Naive thymus-derived CD4-positive, alpha-beta T cell (primary cell): ENCODE measurements at regions of chr14 and their contacts with region 1.

Region 1: DNA sequence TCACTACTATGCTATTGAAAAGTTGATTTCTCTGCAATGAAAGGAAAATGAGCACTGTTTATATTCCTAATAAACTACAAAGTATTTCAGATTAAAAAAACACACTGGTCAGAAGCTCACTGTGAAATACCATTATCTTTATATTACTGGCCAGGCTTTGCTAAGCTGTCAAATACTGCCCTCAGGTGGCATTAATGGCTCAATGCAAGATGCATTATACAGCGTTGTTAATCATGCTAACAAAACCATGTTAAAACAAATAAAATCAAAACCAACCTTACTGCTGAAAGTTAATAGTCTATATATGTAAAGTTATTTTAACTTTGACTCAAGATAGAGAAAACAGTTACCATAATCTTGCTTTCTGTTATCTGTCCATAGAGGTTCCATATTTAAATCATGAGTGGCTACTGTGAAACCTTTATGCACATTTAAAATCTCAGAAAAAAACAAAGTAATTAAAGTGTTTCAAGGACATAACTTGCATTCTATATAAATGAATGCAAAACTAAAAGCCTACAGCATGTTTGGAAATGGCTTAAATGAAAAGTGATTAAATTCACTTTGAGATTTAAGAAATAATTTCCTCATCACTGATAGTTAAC is 121.7 kb downstream of the RALGAPA1 start:
- DNase-seq: peak in 5 of 9 donors; percentile 2 to 20 (median 10)
- ATAC-seq: peak; percentile 74
- H3K4me3 ChIP-seq: no peak overlapping the region
- H3K4me3 Mint-ChIP-seq: no peak overlapping the region
- H3K27ac ChIP-seq: no peak overlapping the region
- H3K27ac Mint-ChIP-seq: no peak overlapping the region
- H3K4me1 ChIP-seq: no peaks in the 10 kb centered on the region
- H3K4me1 Mint-ChIP-seq: peaks cover 0 to 15% (median 0%) of the 10 kb centered on the region in 7 donors
- H3K27me3 ChIP-seq: no peaks in the 10 kb centered on the region
- H3K27me3 Mint-ChIP-seq: no peaks in the 10 kb centered on the region

Region 2: DNA sequence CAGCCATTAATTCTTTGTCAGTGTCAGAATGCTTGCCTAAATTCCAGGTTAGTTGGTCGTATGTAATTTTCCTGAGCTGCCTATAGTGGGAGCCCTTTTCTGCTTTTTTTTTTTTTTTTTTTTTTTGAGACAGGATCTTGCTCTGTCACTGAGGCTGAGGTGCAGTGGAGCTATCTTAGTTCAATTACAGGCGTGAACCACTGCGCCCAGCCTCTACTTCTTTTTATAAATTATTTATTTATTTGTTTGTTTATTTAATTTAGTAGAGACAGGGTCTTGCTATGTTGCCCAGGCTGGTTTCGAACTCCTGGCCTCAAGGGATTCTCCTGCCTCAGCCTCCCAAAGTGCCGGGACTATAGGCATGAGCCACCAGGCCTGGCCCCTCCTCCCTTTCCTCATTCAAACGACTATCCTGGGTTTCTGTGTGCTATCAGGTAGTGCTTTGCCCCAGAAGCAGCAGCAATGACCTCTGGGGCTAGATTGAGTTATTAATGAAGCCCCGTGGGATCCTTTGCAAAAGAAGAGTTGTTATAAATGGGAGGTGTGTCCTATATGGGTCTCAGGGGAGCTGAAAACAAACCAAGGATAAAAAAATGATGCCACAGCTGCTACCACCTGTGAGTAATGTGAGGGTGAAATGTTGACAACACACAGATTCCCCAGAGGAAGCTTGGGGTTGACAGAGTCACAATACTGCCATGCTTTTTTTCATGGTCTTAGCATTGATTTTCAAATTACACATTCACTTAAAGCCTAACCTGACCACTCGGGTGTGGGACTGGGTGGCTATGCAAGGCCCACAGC is 248.3 kb before region 1 on chr14:
- CTCF ChIA-PET with region 1: no interaction called
- POLR2A ChIA-PET with region 1: no interaction called
- intact Hi-C with region 1: loop called in 1 of 2 experiments (anchors 2 kb)
- DNase-seq: no peak
- ATAC-seq: no peak
- H3K4me3 ChIP-seq: no peak overlapping the region
- H3K4me3 Mint-ChIP-seq: no peak overlapping the region
- H3K27ac ChIP-seq: no peak overlapping the region
- H3K27ac Mint-ChIP-seq: no peak overlapping the region
- H3K4me1 ChIP-seq: no peaks in the 10 kb centered on the region
- H3K4me1 Mint-ChIP-seq: peaks cover 0 to 4% (median 0%) of the 10 kb centered on the region in 7 donors
- H3K27me3 ChIP-seq: no peaks in the 10 kb centered on the region
- H3K27me3 Mint-ChIP-seq: peaks cover 0 to 3% (median 0%) of the 10 kb centered on the region in 5 donors

Region 3: DNA sequence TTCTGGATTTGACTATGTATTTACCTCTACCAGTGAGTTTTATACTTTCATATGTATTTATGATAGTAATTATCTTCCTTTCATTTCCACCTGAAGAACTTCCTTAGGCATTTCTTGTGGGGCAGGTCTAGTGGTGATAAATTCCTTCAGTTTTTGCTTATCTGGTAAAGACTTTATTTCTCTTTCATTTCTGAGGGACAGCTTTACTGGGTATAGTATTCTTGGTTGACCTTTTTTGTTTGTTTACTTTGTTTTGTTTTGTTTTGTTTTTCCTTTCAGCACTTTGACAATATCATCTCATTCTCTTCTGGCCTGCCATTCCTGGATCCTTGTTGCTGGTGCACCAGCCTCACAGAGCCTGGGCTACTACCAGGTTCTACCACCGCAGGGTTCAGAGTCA is 229.0 kb before region 1 on chr14:
- CTCF ChIA-PET with region 1: no interaction called
- POLR2A ChIA-PET with region 1: no interaction called
- intact Hi-C with region 1: no loop called
- DNase-seq: no peak
- ATAC-seq: no peak
- H3K4me3 ChIP-seq: no peak overlapping the region
- H3K4me3 Mint-ChIP-seq: no peak overlapping the region
- H3K27ac ChIP-seq: no peak overlapping the region
- H3K27ac Mint-ChIP-seq: no peak overlapping the region
- H3K4me1 ChIP-seq: no peaks in the 10 kb centered on the region
- H3K4me1 Mint-ChIP-seq: no peaks in the 10 kb centered on the region
- H3K27me3 ChIP-seq: no peaks in the 10 kb centered on the region
- H3K27me3 Mint-ChIP-seq: peaks cover 0 to 15% (median 5%) of the 10 kb centered on the region in 5 donors

Region 4: DNA sequence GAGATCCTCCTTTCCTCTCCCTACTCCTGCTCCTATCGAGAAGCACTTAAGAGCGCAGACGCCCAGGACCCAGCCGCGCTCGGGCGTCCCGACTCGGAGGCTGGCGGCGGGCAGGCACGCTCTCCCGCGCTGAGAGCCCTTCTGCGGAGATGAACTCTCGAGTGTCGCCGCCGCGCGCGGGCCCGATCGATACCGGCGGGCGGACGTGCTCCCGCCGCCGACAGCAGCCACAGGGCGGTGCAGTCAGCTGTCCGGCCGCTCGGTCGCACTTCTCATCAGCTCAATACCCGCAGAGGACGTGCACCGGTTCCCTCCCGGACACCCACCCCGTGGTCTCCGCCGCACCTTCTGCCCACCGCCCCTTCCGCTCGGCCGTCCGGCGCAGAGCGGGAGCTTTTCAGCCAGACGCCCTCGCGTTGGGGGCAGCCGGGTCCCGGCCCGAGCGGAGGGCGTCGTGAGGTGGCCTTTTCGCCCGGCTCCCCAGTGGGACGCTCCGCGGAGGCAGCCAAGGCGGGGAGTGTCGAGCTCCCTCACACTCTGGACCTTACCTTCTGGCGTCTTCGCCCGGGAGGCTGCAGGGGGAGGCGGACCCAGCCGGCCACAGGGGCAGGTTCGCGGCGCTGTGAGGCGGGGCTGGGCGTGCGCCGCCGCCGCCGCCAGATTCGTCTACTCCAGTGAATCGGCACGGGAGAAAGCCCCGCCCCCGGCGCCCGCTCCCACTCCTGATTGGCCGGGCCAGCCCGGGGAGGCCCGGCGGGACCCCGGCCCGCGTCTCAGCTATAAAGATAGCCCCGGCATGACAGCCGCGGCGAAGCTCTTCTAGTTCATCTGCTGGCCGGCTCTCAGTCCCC is 153.9 kb before region 1 on chr14 and contains the start of gene INSM2:
- CTCF ChIA-PET with region 1: no interaction called
- POLR2A ChIA-PET with region 1: no interaction called
- intact Hi-C with region 1: loop called in 1 of 2 experiments (anchors 5 kb)
- DNase-seq: peak in 8 of 9 donors; percentile 9 to 76 (median 21)
- ATAC-seq: peak; percentile 65
- H3K4me3 ChIP-seq: peak within 1 kb of the TSS; percentile 49
- H3K4me3 Mint-ChIP-seq: peak within 1 kb of the TSS; percentile 74 to 86 (median 82)
- H3K27ac ChIP-seq: no peak within 1 kb of the TSS
- H3K27ac Mint-ChIP-seq: no peak within 1 kb of the TSS
- H3K4me1 ChIP-seq: peaks cover 0 to 7% of the 10 kb centered on the region in 2 donors
- H3K4me1 Mint-ChIP-seq: peaks cover 0 to 23% (median 13%) of the 10 kb centered on the region in 7 donors
- H3K27me3 ChIP-seq: peaks cover 3 to 11% of the 10 kb centered on the region in 2 donors
- H3K27me3 Mint-ChIP-seq: peaks cover 53 to 81% (median 60%) of the 10 kb centered on the region in 5 donors
- total RNA-seq, gene INSM2: not detected

Region 5: GRCh38 chr14:35814371-35815005 is 127.1 kb after region 1 on chr14:
- CTCF ChIA-PET with region 1: no interaction called
- POLR2A ChIA-PET with region 1: no interaction called
- intact Hi-C with region 1: loop called (anchors 1 to 5 kb)
- DNase-seq: peak; percentile 54 to 83 (median 71)
- ATAC-seq: peak; percentile 96
- H3K4me3 ChIP-seq: no peak overlapping the region
- H3K4me3 Mint-ChIP-seq: no peak overlapping the region
- H3K27ac ChIP-seq: no peak overlapping the region
- H3K27ac Mint-ChIP-seq: no peak overlapping the region
- H3K4me1 ChIP-seq: no peaks in the 10 kb centered on the region
- H3K4me1 Mint-ChIP-seq: peaks cover 0 to 7% (median 1%) of the 10 kb centered on the region in 7 donors
- H3K27me3 ChIP-seq: no peaks in the 10 kb centered on the region
- H3K27me3 Mint-ChIP-seq: peaks cover 0 to 14% (median 0%) of the 10 kb centered on the region in 5 donors